ENCODE measurements at regions of chr14 and their contacts with region 1.

Region 1: GRCh38 chr14:102316743-102317563 is 2.6 kb upstream of the ZNF839 start:
- DNase-seq: peak; percentile 79 to 99 (median 91)
- ATAC-seq: peak; percentile 66 to 71 (median 68)
- H3K4me3 ChIP-seq: peak overlapping the region; percentile 55 to 62
- H3K4me3 Mint-ChIP-seq: peak overlapping the region; percentile 94 to 95 (median 94)
- H3K27ac ChIP-seq: peak overlapping the region; percentile 56
- H3K27ac Mint-ChIP-seq: peak overlapping the region; percentile 93 to 96
- H3K4me1 ChIP-seq: peaks cover 28 to 58% of the 10 kb centered on the region in 2 experiments
- H3K4me1 Mint-ChIP-seq: peaks cover 55 to 66% (median 63%) of the 10 kb centered on the region in 3 donors
- H3K27me3 ChIP-seq: no peaks in the 10 kb centered on the region
- H3K27me3 Mint-ChIP-seq: peaks cover 0 to 2% of the 10 kb centered on the region in 2 donors

Region 2: GRCh38 chr14:102086972-102087761 is 229.8 kb before region 1 on chr14 and contains the start of gene HSP90AA1:
- CTCF ChIA-PET with region 1: no interaction called
- POLR2A ChIA-PET with region 1: interaction called in 1 of 2 experiments, 10 read pairs
- DNase-seq: peak; percentile 86 to 97 (median 91)
- ATAC-seq: peak; percentile 81 to 84 (median 82)
- H3K4me3 ChIP-seq: peak within 1 kb of the TSS; percentile 64 to 92
- H3K4me3 Mint-ChIP-seq: peak within 1 kb of the TSS; percentile 85 to 97 (median 94)
- H3K27ac ChIP-seq: peak within 1 kb of the TSS; percentile 96
- H3K27ac Mint-ChIP-seq: peak within 1 kb of the TSS; percentile 96 to 97
- H3K4me1 ChIP-seq: peaks cover 22 to 47% of the 10 kb centered on the region in 2 experiments
- H3K4me1 Mint-ChIP-seq: peaks cover 60 to 64% (median 63%) of the 10 kb centered on the region in 3 donors
- H3K27me3 ChIP-seq: no peaks in the 10 kb centered on the region
- H3K27me3 Mint-ChIP-seq: no peaks in the 10 kb centered on the region
- total RNA-seq, gene HSP90AA1: 230 to 471 (median 263) TPM

Region 3: GRCh38 chr14:102304611-102305509 is 12.1 kb before region 1 on chr14 and contains the start of gene MOK:
- CTCF ChIA-PET with region 1: interaction called, 8 to 28 read pairs
- POLR2A ChIA-PET with region 1: interaction called, 11 to 12 read pairs
- DNase-seq: peak; percentile 84 to 99 (median 94)
- ATAC-seq: peak; percentile 92 to 94 (median 93)
- H3K4me3 ChIP-seq: peak within 1 kb of the TSS; percentile 61 to 74
- H3K4me3 Mint-ChIP-seq: peak within 1 kb of the TSS; percentile 84 to 94 (median 94)
- H3K27ac ChIP-seq: peak within 1 kb of the TSS; percentile 67
- H3K27ac Mint-ChIP-seq: peak within 1 kb of the TSS; percentile 92 to 96
- H3K4me1 ChIP-seq: peaks cover 2 to 12% of the 10 kb centered on the region in 2 experiments
- H3K4me1 Mint-ChIP-seq: peaks cover 6 to 11% (median 7%) of the 10 kb centered on the region in 3 donors
- H3K27me3 ChIP-seq: peaks cover 0 to 3% of the 10 kb centered on the region in 2 experiments
- H3K27me3 Mint-ChIP-seq: peaks cover 0 to 2% of the 10 kb centered on the region in 2 donors
- total RNA-seq, gene MOK: 0.77 to 4.1 (median 1.9) TPM

Region 4: GRCh38 chr14:102390064-102390855 is 73.3 kb after region 1 on chr14:
- CTCF ChIA-PET with region 1: no interaction called
- POLR2A ChIA-PET with region 1: no interaction called
- DNase-seq: no peak
- ATAC-seq: no peak
- H3K4me3 ChIP-seq: no peak overlapping the region
- H3K4me3 Mint-ChIP-seq: no peak overlapping the region
- H3K27ac ChIP-seq: no peak overlapping the region
- H3K27ac Mint-ChIP-seq: no peak overlapping the region
- H3K4me1 ChIP-seq: peaks cover 6 to 10% of the 10 kb centered on the region in 2 experiments
- H3K4me1 Mint-ChIP-seq: peaks cover 10 to 21% (median 12%) of the 10 kb centered on the region in 3 donors
- H3K27me3 ChIP-seq: no peaks in the 10 kb centered on the region
- H3K27me3 Mint-ChIP-seq: no peaks in the 10 kb centered on the region

Measured in T-cell (primary cell).